GM13976 (cell line): ENCODE measurements at regions of chr3 and their contacts with region 1.

Region 1: DNA sequence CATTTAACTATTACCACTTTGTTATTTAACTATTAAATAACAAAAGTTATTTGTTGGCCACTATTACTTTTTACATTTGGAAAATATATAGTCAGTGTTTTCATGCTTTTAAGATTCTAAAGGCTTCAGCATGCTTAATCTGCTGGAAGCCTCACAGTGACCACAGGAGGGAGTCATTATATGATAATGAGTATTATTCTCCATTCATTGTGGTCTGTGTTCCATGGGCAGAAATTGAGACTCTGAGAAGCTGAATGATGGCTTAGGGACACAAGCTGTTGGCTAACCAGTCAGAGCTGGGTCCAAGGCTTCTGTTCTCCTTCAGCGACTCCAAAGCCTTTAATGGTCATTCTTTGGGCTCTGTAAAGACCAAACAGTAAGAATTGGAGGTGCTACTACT is 64.7 kb downstream of the BFSP2 start:
- DNase-seq: no peak
- CTCF ChIP-seq: peak; percentile 44

Region 2: DNA sequence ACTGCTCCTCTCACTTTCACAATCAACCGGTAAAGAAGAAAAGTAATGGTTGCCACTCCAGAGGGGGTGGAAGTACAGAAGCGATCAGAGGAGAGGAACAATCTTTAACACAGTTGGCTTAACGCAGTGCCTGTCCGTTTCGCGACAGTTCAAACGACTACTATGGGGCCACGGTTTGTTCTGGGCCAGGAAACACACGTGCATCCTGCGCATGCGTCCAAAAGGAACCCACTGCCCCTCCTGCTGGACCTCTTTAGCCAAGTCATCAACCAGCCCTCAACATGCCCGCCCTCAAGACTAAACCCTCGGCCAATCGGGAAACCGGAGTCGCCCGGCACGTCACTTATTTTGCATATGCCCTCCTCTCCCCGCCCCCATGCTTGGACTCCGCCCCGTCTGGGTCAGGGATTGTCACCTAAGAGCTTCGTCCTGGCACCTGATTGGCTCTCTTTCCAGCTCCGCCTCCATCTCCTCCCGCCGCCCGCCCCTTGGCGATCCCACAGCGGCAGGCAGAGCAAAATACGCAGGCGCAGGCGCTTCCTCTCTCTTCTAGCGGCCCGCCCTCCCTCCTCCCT is 108.6 kb after region 1 on chr3:
- in situ Hi-C with region 1: loop called (anchors 10 kb)
- DNase-seq: peak; percentile 92
- CTCF ChIP-seq: peak; percentile 2

Region 3: DNA sequence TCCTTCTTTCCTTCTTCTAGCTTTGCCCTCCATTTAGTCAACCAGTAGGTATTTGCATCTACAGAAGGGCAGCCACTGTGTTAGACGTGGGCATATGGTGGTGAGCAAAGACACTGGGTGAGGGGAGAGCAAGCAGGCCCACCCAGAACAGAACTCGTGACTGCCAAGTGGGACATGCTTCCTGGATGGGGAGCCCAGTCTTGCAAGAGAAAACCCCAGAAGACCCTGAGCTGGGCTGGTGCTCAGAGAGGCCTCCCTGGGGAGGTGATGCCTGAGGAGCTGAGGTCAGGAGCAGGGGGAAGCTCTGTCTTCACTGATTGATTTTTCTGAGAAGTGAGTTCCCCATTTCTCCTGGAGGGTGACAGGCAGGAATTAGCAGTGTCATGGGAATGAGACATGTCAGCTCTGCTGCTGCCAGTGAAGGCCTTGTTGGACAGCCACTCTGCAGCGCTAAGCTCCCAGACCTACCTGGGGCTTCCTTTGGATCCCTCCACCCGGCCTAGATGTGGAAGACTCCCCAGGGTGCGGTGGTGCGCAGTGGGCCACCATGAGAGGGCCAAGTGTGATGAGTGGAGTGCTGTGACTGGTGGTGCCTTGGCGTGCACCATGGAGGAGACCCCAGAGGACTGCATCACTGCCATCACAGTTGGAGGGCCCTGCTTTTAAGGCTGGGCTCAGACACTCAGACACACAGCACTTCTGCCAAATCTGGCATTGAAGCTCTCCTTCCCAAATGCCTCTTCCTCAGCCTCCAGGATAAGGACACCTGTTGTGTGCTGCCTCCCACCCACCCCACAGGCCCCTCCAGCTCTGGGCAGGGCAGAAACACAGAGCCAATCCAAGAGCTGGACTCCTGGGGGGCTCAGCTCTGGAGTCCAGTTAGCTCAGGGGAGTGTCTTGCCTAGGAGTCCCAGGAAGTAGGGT is 237.1 kb after region 1 on chr3:
- in situ Hi-C with region 1: no loop called
- DNase-seq: no peak
- CTCF ChIP-seq: no peak